ENCODE measurements at regions of chr1 and their contacts with region 1.

Region 1: DNA sequence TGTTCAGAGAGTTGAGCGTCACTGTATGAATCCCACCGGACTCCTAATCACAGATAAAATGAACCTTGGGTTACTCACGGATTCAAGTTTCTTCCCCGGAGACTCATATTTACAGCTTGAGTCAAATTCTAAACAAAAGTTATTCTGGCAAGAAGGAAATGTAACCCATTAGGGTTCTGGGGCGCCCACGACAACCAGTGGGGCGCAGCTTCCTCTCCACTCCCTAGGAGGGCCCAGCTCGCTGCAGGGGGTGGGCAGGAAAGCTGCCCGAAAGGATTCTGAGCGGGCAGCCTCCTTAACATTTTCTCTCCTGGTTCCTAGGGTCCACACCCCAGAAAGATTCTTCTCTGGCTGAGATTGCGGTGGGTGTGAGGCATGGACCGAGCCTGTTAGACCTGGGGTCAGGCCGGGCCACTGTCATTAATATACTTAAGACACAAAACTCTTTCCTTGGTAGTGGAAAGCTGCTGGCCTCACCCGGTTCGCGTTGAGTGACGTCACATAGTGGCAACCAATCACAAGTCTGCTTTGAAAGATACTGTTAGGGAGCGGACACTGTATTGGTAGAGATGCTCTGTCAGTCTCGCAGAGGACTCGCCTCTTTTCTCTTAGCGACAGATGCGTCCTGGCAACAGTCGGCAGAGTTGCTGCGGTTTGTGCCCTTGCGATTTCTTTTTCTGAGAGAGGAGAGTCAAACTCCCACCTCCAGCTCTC is 13.6 kb upstream of the MCOLN3 start:
- DNase-seq: peak; percentile 56
- ATAC-seq: peak; percentile 98
- H3K4me3 Mint-ChIP-seq: peak overlapping the region; percentile 92
- H3K27ac Mint-ChIP-seq: peak overlapping the region; percentile 83
- H3K4me1 Mint-ChIP-seq: peaks cover 27% of the 10 kb centered on the region
- H3K27me3 Mint-ChIP-seq: peaks cover 10% of the 10 kb centered on the region
- CTCF ChIP-seq: no peak

Region 2: DNA sequence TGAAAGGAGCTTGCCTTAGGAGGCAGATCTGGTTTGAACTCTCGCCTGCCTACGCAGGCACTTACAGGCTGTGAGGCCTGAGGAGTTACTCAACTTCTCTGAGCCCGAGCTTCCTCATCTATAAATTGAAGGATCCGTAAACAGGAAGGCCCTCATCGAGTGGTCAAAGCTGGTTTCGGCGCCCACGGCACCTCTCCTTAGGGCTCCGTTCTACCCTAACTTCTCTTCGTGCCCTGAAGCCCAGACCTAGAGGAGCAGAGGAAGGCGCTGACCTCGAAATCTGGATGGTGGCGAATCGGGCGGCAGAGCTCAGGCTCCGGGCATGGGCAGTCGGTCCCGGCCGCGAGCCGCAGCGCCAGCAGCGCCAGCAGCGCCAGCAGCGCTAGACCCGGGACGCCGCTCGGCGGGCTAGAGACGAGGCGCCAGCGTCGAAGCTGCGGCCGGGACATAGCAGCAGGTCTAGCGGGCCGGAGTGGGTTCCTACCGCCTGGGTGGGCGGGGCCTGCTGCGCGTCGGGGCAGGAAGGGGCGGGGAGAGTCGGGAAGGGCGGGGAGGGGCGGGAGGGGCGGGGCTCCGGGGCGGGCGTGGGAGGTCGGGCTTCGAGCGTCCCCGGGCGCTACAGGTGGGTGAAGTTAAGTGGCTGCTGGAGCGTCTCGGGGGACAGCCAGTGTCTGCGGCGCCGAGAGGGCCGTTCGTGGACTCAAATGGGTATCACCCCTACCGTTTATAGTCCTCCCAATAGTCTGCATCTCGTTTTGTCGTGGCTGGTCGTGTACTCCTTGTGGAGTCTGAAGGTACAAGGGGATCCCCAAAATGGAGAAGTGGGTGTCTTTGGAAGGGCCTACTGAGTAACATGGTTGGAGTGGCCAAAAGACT is 487.7 kb before region 1 on chr1 and contains the start of gene CTBS:
- CTCF ChIA-PET with region 1: no interaction called
- POLR2A ChIA-PET with region 1: no interaction called
- intact Hi-C with region 1: loop called (anchors 1 kb)
- DNase-seq: peak; percentile 81
- ATAC-seq: peak; percentile 91
- H3K4me3 Mint-ChIP-seq: peak within 1 kb of the TSS; percentile 96
- H3K27ac Mint-ChIP-seq: peak within 1 kb of the TSS; percentile 99
- H3K4me1 Mint-ChIP-seq: peaks cover 40% of the 10 kb centered on the region
- H3K27me3 Mint-ChIP-seq: no peaks in the 10 kb centered on the region
- CTCF ChIP-seq: no peak
- total RNA-seq, gene CTBS: 11.8 and 13.2 TPM in 2 replicates

Region 3: DNA sequence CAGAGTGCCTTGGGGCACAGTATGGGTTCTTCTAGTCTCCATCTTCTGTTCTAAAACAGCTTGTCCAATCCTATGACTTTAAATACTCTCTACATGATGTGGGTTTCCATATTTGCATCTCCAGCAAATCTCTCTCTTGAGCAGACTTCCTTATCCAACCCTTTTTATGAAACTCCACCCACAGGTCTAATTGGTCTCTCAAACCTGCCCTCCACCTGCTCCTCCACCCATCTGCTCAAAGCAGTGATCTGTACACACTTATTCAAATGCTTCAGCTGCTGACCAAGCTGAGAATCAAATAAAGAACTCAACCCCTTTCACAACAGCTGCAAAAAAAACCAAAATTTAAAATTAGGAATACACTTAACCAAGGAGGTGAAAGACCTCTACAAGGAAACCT is 76.5 kb before region 1 on chr1:
- CTCF ChIA-PET with region 1: no interaction called
- POLR2A ChIA-PET with region 1: no interaction called
- intact Hi-C with region 1: no loop called
- DNase-seq: no peak
- ATAC-seq: peak; percentile 53
- H3K4me3 Mint-ChIP-seq: no peak overlapping the region
- H3K27ac Mint-ChIP-seq: peak overlapping the region; percentile 27
- H3K4me1 Mint-ChIP-seq: peaks cover 46% of the 10 kb centered on the region
- H3K27me3 Mint-ChIP-seq: no peaks in the 10 kb centered on the region
- CTCF ChIP-seq: no peak

Region 4: DNA sequence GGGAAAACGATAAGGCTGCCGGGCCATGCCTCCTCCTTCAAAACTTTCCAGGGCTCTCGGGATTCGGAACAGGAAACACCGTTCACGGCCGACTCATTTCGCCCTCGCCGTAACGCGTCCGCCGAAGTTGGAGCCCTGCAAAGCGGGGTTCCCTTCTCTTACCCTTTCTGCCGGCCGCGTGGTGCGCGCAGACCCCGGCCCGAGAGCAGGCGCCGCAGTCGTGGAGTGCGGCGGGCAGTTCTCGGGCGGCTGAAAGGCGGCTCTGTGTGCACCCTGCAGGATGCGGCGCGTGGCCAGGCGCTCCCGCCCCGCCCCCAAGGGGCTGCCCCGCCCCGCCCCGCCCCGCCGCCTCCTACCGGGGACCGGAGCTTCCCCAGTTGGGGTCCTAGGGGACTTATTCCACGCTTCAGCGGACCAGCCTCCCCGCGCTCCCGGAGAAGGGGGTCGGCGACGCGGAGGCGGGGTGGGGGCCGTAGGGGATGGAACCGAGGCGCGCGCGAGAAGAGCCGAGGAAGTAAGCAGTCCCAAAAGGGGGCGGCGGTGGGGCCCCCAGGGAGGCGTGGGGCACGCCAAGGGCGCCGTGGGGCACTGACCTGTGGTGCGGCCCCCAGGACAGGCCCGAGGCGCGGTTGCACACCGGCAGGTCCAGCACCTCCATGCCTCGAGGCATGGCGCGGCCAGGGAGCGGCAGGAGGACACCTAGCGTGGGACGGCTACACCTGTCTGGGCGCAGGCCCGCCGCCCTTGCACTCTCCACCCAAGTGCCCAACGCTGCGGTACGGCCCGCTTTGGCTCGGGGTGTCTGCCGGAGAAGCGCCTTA is 64.8 kb before region 1 on chr1 and contains the start of gene MCOLN2:
- CTCF ChIA-PET with region 1: no interaction called
- POLR2A ChIA-PET with region 1: interaction called, 3 read pairs
- intact Hi-C with region 1: loop called (anchors 1 kb)
- DNase-seq: peak; percentile 60
- ATAC-seq: peak; percentile 67
- H3K4me3 Mint-ChIP-seq: peak within 1 kb of the TSS; percentile 85
- H3K27ac Mint-ChIP-seq: peak within 1 kb of the TSS; percentile 87
- H3K4me1 Mint-ChIP-seq: peaks cover 63% of the 10 kb centered on the region
- H3K27me3 Mint-ChIP-seq: peaks cover 2% of the 10 kb centered on the region
- CTCF ChIP-seq: no peak
- total RNA-seq, gene MCOLN2: 60.1 and 80.2 TPM in 2 replicates

Region 5: DNA sequence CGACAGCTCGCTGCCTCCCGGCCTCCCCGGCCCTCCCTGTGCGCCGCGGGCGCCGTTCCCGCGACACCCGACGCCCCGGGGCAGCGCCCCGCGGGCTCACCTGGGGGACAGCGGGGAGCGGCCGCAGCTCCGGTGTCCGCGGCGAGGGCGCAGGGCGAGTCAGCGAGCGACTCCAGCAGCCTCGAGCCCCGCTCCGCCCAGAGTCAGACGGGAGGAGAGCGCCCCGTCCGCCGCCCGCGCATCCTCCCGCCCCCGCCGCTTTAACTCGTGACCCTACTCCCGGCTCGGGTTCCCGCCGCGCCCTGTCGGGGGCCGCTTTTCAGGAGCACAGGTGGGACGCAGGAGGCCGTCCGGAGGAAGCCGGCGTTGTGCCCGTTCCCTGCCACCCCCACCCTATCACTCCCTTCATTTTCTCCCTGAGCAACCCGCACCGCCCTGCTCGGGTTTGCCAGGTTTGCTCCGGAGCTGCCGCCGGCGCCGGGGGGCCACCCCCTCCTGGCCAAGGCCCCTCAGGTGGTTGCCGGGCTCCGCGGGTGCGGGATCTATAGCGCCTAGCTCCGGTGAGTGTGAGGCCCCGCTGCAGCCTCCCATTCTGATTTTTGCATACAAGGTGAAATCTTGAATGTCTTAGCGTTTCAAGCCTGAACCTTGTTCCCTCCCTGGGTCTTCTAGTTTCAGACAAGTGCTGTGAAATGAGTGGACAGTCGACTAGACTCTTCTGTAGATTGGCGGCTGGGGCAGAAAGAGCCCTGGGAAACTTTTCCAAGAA is 13.4 kb before region 1 on chr1 and contains the start of gene MCOLN3:
- CTCF ChIA-PET with region 1: no interaction called
- POLR2A ChIA-PET with region 1: no interaction called
- intact Hi-C with region 1: loop called (anchors 1 kb)
- DNase-seq: peak; percentile 42
- ATAC-seq: peak; percentile 69
- H3K4me3 Mint-ChIP-seq: peak within 1 kb of the TSS; percentile 76
- H3K27ac Mint-ChIP-seq: no peak within 1 kb of the TSS
- H3K4me1 Mint-ChIP-seq: peaks cover 8% of the 10 kb centered on the region
- H3K27me3 Mint-ChIP-seq: peaks cover 41% of the 10 kb centered on the region
- CTCF ChIP-seq: no peak
- total RNA-seq, gene MCOLN3: 0.16 TPM in 1 of 2 replicates, not detected in the other

Region 6: GRCh38 chr1:85200870-85201339 is 139.0 kb after region 1 on chr1 and contains the start of gene SYDE2:
- CTCF ChIA-PET with region 1: no interaction called
- POLR2A ChIA-PET with region 1: no interaction called
- intact Hi-C with region 1: loop called (anchors 5 kb)
- DNase-seq: peak; percentile 69
- ATAC-seq: peak; percentile 81
- H3K4me3 Mint-ChIP-seq: peak within 1 kb of the TSS; percentile 92
- H3K27ac Mint-ChIP-seq: peak within 1 kb of the TSS; percentile 79
- H3K4me1 Mint-ChIP-seq: peaks cover 14% of the 10 kb centered on the region
- H3K27me3 Mint-ChIP-seq: peaks cover 26% of the 10 kb centered on the region
- CTCF ChIP-seq: no peak
- total RNA-seq, gene SYDE2: 0.38 and 0.64 TPM in 2 replicates

Region 7: DNA sequence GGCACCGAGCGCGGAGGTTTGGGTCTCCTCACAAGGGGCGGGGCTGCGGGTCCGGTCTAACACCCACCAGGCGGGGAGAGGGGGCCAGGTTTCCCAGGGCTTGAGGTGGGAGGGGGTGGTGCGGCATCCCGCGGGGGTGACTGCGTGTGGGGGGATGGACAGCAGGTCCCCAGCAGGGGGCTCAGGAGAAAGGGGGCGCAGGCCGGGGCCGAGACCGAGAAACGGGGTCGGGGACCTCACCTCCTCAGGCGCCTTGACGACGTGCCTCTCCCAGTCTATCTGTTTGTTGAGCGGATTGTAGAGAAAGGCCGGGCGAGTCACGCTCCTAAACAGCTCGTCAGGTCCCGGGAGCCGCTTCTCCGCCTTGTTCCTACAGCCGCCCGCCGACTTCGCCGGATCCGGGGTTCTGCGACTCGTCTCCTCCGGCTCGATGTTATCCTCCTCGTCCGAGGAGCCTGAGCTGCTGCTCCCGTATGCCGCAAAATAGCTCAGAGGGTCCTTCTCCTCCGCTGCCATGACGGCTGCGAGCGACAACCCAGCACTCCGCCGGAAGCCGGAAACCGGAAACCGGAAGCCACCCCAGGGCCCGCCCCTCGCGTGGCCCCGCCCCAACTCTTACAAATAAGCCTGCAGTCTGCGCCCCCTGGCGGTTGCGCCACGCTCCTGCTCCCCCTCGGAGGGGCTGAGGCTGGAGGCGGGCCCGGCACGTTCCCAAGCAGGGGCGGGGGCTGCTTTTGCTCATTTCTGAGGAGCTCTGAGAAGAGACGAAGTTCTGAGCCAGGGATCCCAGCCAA is 197.4 kb after region 1 on chr1 and contains the start of gene C1orf52:
- CTCF ChIA-PET with region 1: no interaction called
- POLR2A ChIA-PET with region 1: interaction called, 4 read pairs
- intact Hi-C with region 1: loop called (anchors 2 kb)
- DNase-seq: peak; percentile 99
- ATAC-seq: peak; percentile 96
- H3K4me3 Mint-ChIP-seq: peak within 1 kb of the TSS; percentile 98
- H3K27ac Mint-ChIP-seq: peak within 1 kb of the TSS; percentile 92
- H3K4me1 Mint-ChIP-seq: peaks cover 37% of the 10 kb centered on the region
- H3K27me3 Mint-ChIP-seq: no peaks in the 10 kb centered on the region
- CTCF ChIP-seq: peak; percentile 88
- total RNA-seq, gene C1orf52: 31.4 and 32.0 TPM in 2 replicates

Region 8: GRCh38 chr1:85707990-85708828 is 646.3 kb after region 1 on chr1 and contains the start of gene ZNHIT6:
- CTCF ChIA-PET with region 1: no interaction called
- POLR2A ChIA-PET with region 1: no interaction called
- intact Hi-C with region 1: loop called (anchors 5 kb)
- DNase-seq: peak; percentile 69
- ATAC-seq: peak; percentile 96
- H3K4me3 Mint-ChIP-seq: no peak within 1 kb of the TSS
- H3K27ac Mint-ChIP-seq: no peak within 1 kb of the TSS
- H3K4me1 Mint-ChIP-seq: peaks cover 24% of the 10 kb centered on the region
- H3K27me3 Mint-ChIP-seq: no peaks in the 10 kb centered on the region
- CTCF ChIP-seq: no peak
- total RNA-seq, gene ZNHIT6: 19.6 and 21.1 TPM in 2 replicates